ENCODE measurements at regions of chr13 and their contacts with region 1.

Region 1: GRCh38 chr13:113562085-113562749 is 22.3 kb upstream of the TFDP1 start:
- DNase-seq: peak; percentile 23
- H3K4me3 ChIP-seq: no peak overlapping the region
- CTCF ChIP-seq: peak; percentile 91

Region 2: DNA sequence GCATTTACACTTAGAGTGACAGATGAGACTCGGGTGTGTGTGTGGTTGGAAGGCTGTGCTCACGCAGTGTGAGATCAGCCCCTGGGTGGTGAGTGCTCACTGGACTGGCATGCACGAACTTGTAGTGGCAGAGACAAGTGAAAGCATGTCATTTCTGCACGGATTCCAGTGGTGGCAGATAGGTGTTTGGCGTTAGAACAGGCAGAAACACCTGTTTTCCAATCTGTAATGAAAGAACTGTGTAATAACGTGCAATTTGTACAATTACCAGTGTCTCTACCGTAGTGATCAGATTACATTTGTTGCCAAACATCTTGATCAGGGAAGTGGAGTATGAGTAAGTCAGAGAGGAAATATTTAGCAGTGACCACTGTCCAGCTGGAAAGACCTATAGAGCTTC is 257.0 kb before region 1 on chr13:
- CTCF ChIA-PET with region 1: no interaction called
- POLR2A ChIA-PET with region 1: no interaction called
- DNase-seq: no peak
- H3K4me3 ChIP-seq: no peak overlapping the region
- CTCF ChIP-seq: no peak

Region 3: DNA sequence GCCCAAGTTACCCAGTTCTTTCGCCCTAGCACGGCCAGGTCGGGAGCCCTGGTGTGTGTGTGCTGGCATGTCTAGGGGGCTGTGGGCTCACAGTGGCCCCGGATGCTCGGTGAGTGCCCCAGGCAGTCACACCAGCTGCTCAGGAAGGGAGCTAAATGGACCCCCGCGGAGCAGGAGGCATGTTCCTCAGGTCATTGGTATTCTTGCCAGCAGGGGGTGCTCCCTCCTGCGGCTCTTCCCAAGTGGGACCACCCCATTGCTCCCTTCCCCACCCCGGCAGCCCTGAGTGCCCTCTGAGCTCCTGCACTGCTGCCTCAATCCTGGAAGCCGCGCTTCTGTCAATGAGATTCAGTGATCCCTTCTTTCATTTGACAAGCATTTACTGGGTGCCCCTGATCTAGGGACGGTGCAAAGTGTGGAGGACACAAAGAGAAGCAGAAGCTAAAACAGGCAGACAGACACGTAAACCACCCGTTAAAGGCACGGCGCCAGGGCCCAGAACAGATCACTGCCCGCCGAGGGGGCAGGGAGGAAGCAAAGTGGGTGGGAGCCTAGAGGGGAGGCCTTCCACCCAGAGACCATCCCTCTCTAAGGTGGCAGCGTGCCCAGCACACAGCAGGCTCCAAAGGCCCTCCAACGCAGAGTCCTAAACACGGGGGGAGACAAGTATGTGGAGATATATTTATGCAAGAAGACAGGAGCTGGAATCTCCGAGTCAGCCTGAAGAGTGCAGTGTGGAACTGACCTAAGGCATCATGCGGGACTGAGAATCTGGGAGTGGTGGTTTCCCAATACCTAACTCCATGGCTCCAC is 103.8 kb before region 1 on chr13:
- CTCF ChIA-PET with region 1: interaction called, 22 read pairs
- POLR2A ChIA-PET with region 1: no interaction called
- DNase-seq: no peak
- H3K4me3 ChIP-seq: no peak overlapping the region
- CTCF ChIP-seq: peak; percentile 34

Region 4: GRCh38 chr13:113548171-113548641 is 14.0 kb before region 1 on chr13:
- CTCF ChIA-PET with region 1: interaction called, 14 read pairs
- POLR2A ChIA-PET with region 1: no interaction called
- DNase-seq: no peak
- H3K4me3 ChIP-seq: no peak overlapping the region
- CTCF ChIP-seq: no peak

Region 5: DNA sequence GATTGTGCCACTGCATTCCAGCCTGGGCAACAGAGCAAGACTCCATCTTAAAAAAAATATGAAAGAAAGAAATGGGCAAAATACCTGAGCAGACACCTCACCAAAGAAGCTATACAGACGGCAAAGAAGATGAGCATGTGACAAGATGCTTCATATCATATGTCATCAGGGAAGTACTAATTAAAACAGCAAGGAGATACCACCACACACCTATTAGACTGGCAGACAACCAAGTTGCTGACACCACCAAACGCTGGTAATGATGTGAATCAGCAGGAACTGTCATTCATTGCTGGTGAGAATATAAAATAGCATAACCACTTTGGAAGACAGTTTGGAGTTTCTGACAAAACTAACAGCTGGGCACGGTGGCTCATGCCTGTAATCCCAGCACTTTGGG is 10.8 kb after region 1 on chr13:
- CTCF ChIA-PET with region 1: interaction called, 37 read pairs
- POLR2A ChIA-PET with region 1: no interaction called
- DNase-seq: no peak
- H3K4me3 ChIP-seq: no peak overlapping the region
- CTCF ChIP-seq: no peak

Region 6: GRCh38 chr13:113629866-113630265 is 67.6 kb after region 1 on chr13:
- CTCF ChIA-PET with region 1: no interaction called
- POLR2A ChIA-PET with region 1: no interaction called
- DNase-seq: no peak
- H3K4me3 ChIP-seq: no peak overlapping the region
- CTCF ChIP-seq: no peak